Right ventricle myocardium inferior (tissue), 1 donor: ENCODE measurements at regions of chr13 and their contacts with region 1.

Region 1: GRCh38 chr13:79480954-79481684 is at the start of gene NDFIP2:
- DNase-seq: peak; percentile 92
- ATAC-seq: peak; percentile 96
- total RNA-seq, gene NDFIP2: 36.4 TPM

Region 2: GRCh38 chr13:79434556-79434955 is 46.6 kb before region 1 on chr13:
- intact Hi-C with region 1: loop called (anchors 5 kb)
- DNase-seq: no peak
- ATAC-seq: no peak

Region 3: GRCh38 chr13:79525064-79525857 is 44.1 kb after region 1 on chr13:
- intact Hi-C with region 1: loop called (anchors 5 kb)
- DNase-seq: no peak
- ATAC-seq: no peak

Region 4: GRCh38 chr13:79541426-79542049 is 60.4 kb after region 1 on chr13:
- intact Hi-C with region 1: loop called (anchors 2 kb)
- DNase-seq: no peak
- ATAC-seq: no peak